ENCODE measurements at regions of chr12 and their contacts with region 1.

Region 1: GRCh38 chr12:71392521-71393145 is 47.0 kb upstream of the LGR5 start:
- DNase-seq: peak; percentile 67
- H3K4me3 ChIP-seq: no peak overlapping the region
- H3K27ac ChIP-seq: no peak overlapping the region
- H3K4me1 ChIP-seq: peaks cover 0 to 5% of the 10 kb centered on the region in 2 experiments; a peak in 2 of 4 replicates
- H3K27me3 ChIP-seq: no peaks in the 10 kb centered on the region
- CTCF ChIP-seq: peak; percentile 82
- EP300 ChIP-seq: no peak
- RAD21 ChIP-seq: peak; percentile 76

Region 2: DNA sequence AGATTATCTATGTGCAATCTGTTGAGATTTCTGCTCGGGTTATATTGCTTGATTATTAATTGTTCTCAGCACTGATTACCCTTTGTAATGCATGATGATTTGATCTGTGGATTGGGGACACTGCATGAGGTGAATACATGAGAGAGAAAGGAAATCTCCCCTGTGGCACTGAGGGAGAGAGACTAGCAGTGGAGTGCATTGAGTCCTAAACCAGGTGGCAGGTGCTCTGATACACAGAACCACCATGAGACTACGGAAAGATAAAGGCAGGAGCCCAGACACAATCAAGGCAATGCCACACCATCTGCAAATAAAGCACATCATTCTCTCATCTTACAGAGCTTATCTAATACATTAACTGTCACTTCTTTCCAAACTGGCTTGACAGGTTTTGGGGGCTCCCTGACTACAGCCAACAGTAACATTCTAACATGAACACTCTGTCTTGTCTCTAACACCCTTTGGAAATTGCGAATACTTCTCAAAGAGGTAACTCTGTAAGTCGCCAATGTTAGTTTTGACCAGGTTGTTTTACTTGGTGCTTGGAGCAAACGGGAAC is 197.2 kb before region 1 on chr12:
- CTCF ChIA-PET with region 1: interaction called, 10 read pairs
- POLR2A ChIA-PET with region 1: no interaction called
- DNase-seq: no peak
- H3K4me3 ChIP-seq: no peak overlapping the region
- H3K27ac ChIP-seq: peak overlapping the region in 1 of 2 experiments; percentile 96; a peak in 2 of 4 replicates
- H3K4me1 ChIP-seq: peaks cover 16 to 18% of the 10 kb centered on the region in 2 experiments; a peak in 3 of 4 replicates
- H3K27me3 ChIP-seq: no peaks in the 10 kb centered on the region
- CTCF ChIP-seq: no peak
- EP300 ChIP-seq: no peak
- RAD21 ChIP-seq: no peak

Region 3: GRCh38 chr12:71216725-71217579 is 175.7 kb before region 1 on chr12:
- CTCF ChIA-PET with region 1: interaction called, 29 read pairs
- POLR2A ChIA-PET with region 1: no interaction called
- DNase-seq: peak; percentile 13
- H3K4me3 ChIP-seq: no peak overlapping the region
- H3K27ac ChIP-seq: no peak overlapping the region
- H3K4me1 ChIP-seq: peaks cover 0 to 9% of the 10 kb centered on the region in 2 experiments; a peak in 2 of 4 replicates
- H3K27me3 ChIP-seq: no peaks in the 10 kb centered on the region
- CTCF ChIP-seq: peak; percentile 54
- EP300 ChIP-seq: no peak
- RAD21 ChIP-seq: peak; percentile 80

Region 4: GRCh38 chr12:71299541-71300376 is 92.9 kb before region 1 on chr12:
- CTCF ChIA-PET with region 1: no interaction called
- POLR2A ChIA-PET with region 1: no interaction called
- DNase-seq: no peak
- H3K4me3 ChIP-seq: no peak overlapping the region
- H3K27ac ChIP-seq: no peak overlapping the region
- H3K4me1 ChIP-seq: peaks cover 0 to 3% of the 10 kb centered on the region in 2 experiments; a peak in 2 of 4 replicates
- H3K27me3 ChIP-seq: no peaks in the 10 kb centered on the region
- CTCF ChIP-seq: no peak
- EP300 ChIP-seq: no peak
- RAD21 ChIP-seq: no peak

Measured in SK-N-SH (cell line).